GM12878 (cell line): ENCODE measurements at regions of chr9 and their contacts with region 1.

Region 1: GRCh38 chr9:123268240-123268949 is at the start of gene STRBP:
- DNase-seq: peak; percentile 50
- ATAC-seq: peak; percentile 91
- H3K4me3 ChIP-seq: peak within 1 kb of the TSS; percentile 83
- H3K27ac ChIP-seq: peak within 1 kb of the TSS; percentile 61
- H3K4me1 ChIP-seq: peaks cover 17% of the 10 kb centered on the region
- H3K27me3 ChIP-seq: no peaks in the 10 kb centered on the region
- CTCF ChIP-seq: peak in 1 of 3 experiments; percentile 18; a peak in 1 of 6 replicates
- EP300 ChIP-seq: no peak
- POLR2A ChIP-seq: peak; percentile 69
- RAD21 ChIP-seq: no peak
- polyA plus RNA-seq, gene STRBP: 31.0 to 50.1 TPM

Region 2: GRCh38 chr9:123246534-123246933 is 21.9 kb before region 1 on chr9:
- CTCF ChIA-PET with region 1: interaction called, 5 read pairs
- POLR2A ChIA-PET with region 1: interaction called, 3 read pairs
- RAD21 ChIA-PET with region 1: interaction called, 5 read pairs
- SMC1A ChIA-PET with region 1: interaction called, 83 read pairs
- in situ Hi-C with region 1: no loop called
- intact Hi-C with region 1: no loop called
- DNase-seq: no peak
- ATAC-seq: no peak
- H3K4me3 ChIP-seq: no peak overlapping the region
- H3K27ac ChIP-seq: no peak overlapping the region
- H3K4me1 ChIP-seq: peaks cover 3% of the 10 kb centered on the region; the same call in 1 of the 2 replicates
- H3K27me3 ChIP-seq: no peaks in the 10 kb centered on the region
- CTCF ChIP-seq: no peak
- EP300 ChIP-seq: no peak
- POLR2A ChIP-seq: no peak
- RAD21 ChIP-seq: no peak

Region 3: GRCh38 chr9:123282362-123283047 is 14.1 kb after region 1 on chr9:
- CTCF ChIA-PET with region 1: no interaction called
- POLR2A ChIA-PET with region 1: interaction called, 3 read pairs
- RAD21 ChIA-PET with region 1: interaction called, 4 read pairs
- SMC1A ChIA-PET with region 1: interaction called, 10 read pairs
- in situ Hi-C with region 1: no loop called
- intact Hi-C with region 1: no loop called
- DNase-seq: no peak
- ATAC-seq: peak; percentile 38; the same call in 1 of the 3 replicates
- H3K4me3 ChIP-seq: no peak overlapping the region
- H3K27ac ChIP-seq: no peak overlapping the region
- H3K4me1 ChIP-seq: no peaks in the 10 kb centered on the region
- H3K27me3 ChIP-seq: no peaks in the 10 kb centered on the region
- CTCF ChIP-seq: no peak
- EP300 ChIP-seq: no peak
- POLR2A ChIP-seq: no peak
- RAD21 ChIP-seq: no peak